Stomach (tissue), 19 donors: ENCODE measurements at regions of chr1 and their contacts with region 1.

Region 1: DNA sequence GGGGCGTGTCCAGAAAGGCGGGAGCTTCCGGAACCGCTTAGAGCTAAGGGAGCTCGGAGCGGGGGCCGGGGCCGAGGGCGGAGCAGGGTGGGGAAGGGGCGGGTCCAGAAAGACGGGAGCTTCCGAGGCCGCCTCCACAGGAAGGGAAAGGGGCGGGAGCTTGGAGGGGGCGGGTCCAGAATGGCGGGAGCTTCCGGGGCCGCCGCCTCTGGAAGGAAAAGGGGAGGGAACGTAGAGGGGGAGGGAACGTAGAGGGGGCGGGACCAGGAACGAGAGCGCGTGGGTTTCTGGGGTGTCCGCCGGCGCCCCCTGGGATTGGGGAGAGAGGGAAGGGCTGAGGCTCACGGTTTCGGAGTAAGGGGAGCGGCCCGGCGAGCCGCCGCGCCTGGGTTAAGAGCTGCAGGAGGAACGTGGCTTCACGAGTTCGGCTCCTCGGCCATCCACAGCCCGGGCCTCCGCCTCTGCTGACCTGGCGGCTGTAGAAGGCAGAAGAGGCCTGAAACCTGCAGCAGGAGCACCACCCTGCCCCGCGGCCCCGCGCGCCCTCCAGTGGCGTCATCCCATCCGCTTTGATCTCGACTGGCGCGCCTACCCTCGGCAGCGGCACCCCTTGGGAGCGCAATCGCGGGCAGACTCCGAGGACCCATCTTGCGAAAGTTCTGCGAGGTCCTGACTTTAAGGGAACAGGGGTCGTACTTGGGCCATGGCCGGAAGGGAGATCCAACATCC is 22.9 kb upstream of the HPDL start:
- DNase-seq: peak; percentile 99
- H3K4me3 ChIP-seq: peak overlapping the region; percentile 66 to 77 (median 71)
- H3K27ac ChIP-seq: peak overlapping the region; percentile 93 to 98 (median 95)
- H3K4me1 ChIP-seq: peaks cover 8 to 27% (median 17%) of the 10 kb centered on the region in 4 donors
- H3K27me3 ChIP-seq: no peaks in the 10 kb centered on the region
- CTCF ChIP-seq: peak in 5 of 7 experiments; percentile 28 to 81 (median 41)
- EP300 ChIP-seq: no peak
- POLR2A ChIP-seq: peak in 1 of 4 donors; percentile 60

Region 2: DNA sequence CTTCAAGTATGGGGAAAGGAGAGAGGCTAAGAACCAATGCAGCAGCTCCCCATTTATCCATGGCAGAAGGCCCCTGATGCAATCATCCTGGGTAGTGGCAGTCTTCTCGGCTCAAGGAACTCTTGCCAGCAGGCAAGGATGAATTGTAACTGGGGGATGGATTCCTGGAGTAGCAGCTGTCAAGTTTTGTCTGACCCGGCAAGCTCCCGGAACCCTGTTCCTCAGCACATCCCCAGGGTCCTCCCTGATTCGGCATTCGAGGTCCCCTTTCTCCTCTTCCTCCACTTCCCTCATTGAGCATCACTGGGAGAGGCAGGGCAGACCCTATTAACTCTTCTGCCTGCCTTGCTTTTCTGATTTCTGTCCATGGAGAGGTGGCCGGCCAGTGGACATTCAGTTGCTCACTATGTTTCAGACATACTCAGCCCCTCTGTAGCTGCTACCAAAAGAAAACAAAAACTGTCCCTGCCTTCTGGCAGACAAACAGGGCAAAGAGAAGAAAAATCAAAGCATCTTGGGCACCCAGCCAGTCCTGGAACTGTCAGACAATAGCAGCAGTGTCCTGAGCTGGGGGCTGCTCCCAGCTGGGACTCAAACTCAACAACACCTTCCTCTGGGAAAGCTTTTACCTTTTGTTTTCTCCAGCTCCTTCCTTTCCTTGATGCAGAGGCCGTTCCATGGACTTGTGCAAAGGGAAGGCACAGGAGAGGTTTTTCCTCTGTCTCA is 455.1 kb before region 1 on chr1:
- intact Hi-C with region 1: no loop called
- DNase-seq: no peak
- H3K4me3 ChIP-seq: no peak overlapping the region
- H3K27ac ChIP-seq: no peak overlapping the region
- H3K4me1 ChIP-seq: peaks cover 0 to 3% (median under 1%) of the 10 kb centered on the region in 4 donors
- H3K27me3 ChIP-seq: no peaks in the 10 kb centered on the region
- CTCF ChIP-seq: no peak
- EP300 ChIP-seq: no peak
- POLR2A ChIP-seq: no peak

Region 3: DNA sequence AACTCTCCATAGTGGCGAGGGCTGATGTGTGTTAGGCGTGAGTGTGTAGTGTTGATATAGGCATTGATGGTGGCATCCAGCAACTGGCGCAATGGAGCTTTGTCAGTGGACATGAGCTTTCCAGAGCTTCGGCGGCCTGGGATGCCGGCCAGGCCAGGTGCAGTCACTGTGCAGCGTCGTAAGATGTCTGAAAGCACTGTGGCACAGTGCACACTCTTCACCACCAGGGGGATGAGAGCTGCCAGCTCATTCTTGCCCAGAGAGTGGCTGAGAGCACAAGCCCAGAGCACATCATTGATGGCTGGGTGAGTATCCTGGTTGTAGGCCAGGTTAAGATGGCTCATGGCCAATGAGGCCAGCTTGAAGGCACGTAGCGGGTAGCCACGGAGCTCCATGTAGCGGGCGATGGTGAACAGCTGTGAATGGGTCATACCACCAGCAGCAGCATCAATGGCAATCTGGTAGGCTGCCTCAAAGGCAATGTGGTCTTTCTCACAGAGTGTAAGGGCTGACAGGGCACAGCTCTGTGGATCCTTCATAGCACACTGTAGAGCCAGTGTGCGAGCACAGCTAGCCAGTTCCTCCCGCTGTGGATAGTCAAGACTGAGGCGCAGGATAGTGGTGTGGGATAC is 285.0 kb before region 1 on chr1:
- intact Hi-C with region 1: loop called (anchors 5 kb)
- DNase-seq: peak; percentile 82
- H3K4me3 ChIP-seq: no peak overlapping the region
- H3K27ac ChIP-seq: no peak overlapping the region
- H3K4me1 ChIP-seq: peaks cover 0 to 15% (median 13%) of the 10 kb centered on the region in 4 donors
- H3K27me3 ChIP-seq: no peaks in the 10 kb centered on the region
- CTCF ChIP-seq: peak in 5 of 7 experiments; percentile 76 to 95 (median 79)
- EP300 ChIP-seq: no peak
- POLR2A ChIP-seq: no peak

Region 4: GRCh38 chr1:45410850-45411314 is 107.1 kb after region 1 on chr1:
- intact Hi-C with region 1: no loop called
- DNase-seq: no peak
- H3K4me3 ChIP-seq: no peak overlapping the region
- H3K27ac ChIP-seq: no peak overlapping the region
- H3K4me1 ChIP-seq: peaks cover 0 to 26% (median 8%) of the 10 kb centered on the region in 4 donors
- H3K27me3 ChIP-seq: no peaks in the 10 kb centered on the region
- CTCF ChIP-seq: no peak
- EP300 ChIP-seq: no peak
- POLR2A ChIP-seq: no peak